WTC11 (cell line): ENCODE measurements at regions of chr15 and their contacts with region 1.

Region 1: DNA sequence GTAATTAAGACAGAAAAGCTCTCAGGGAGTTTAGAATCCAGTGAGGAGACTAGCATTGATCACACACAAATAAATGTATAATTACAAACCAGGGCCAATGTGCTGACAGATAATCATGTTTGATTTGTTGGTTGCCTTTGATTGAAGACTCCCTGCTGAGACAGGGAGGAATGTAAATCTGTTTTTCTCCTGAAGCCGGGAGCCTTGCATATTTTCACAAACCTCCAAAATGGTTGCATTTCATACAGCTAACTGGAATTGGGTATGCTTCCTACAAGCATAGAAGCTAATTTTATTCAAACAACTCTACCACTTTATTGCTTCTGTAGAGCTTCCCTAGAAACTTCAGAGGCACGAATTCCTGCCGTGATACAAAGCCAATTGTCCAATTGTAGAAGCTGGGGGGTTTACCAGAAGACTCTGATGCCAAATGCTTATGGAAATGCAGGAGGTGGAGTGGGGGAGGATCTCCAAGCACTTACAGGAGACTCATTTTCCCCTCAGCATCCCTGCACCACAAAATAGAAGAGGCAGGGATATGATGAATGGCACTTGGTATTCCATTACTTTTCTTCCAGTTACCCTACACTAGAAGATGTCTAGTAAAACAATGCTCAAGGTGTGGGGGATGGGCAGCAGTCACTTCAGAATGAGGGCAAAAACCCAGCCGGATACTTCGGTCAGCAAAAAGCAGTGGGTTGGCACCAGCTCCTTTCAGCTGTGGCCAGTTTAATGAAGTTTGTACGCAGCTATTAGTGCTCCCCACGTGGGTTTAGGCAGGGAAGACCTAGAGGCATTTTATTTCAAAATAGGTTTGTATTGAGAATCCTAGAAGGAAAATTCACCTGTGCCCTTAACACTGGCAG is 11.4 kb upstream of the MEX3B start:
- DNase-seq: no peak
- ATAC-seq: no peak
- H3K4me3 Mint-ChIP-seq: peak overlapping the region; percentile 81
- H3K27ac Mint-ChIP-seq: no peak overlapping the region
- H3K4me1 Mint-ChIP-seq: peaks cover 33% of the 10 kb centered on the region
- H3K27me3 Mint-ChIP-seq: peaks cover 69% of the 10 kb centered on the region
- CTCF ChIP-seq: no peak

Region 2: DNA sequence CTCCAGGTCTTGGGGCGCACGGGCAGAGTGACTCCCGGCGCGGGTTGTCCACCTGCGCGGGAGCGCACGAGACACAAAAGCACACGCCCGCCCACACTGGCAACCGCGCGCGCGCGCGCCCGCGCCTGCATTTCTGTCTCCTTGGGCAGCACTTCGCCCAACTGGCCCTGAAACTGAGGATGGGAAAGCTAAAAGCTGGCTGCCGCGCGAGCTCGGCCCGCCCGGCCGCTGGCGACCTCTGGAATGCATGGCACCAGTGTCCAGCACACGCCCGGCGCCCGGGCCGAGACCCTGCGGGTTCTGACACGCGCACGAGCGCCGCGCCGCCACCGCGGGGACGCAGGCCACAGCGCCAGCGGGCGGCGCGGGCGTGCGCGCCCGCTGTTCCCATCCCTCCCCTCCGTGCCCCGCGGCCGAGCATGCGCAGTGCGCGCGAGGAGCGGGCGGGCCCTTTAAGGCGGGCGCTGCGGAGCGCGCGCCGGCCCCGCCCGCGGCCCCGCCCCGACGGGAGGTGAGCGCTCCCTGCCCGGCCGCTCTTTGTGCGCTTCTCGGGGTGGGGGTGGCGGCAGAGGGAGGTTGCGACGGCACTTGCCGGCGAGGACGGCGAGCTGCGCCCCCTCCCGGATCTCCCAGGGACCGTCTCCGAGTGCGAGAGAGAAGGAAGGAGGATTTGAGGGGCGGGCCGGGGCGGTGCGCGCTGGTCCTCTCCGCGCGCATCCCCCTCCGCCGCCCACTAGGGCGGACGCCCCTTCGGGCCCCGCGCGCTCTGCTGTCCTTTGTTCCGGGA is 10.3 kb before region 1 on chr15:
- CTCF ChIA-PET with region 1: interaction called, 22 read pairs
- POLR2A ChIA-PET with region 1: interaction called, 11 read pairs
- DNase-seq: peak; percentile 97
- ATAC-seq: peak; percentile 53
- H3K4me3 Mint-ChIP-seq: peak overlapping the region; percentile 89
- H3K27ac Mint-ChIP-seq: peak overlapping the region; percentile 85; the same call in 1 of the 2 replicates
- H3K4me1 Mint-ChIP-seq: peaks cover 32% of the 10 kb centered on the region
- H3K27me3 Mint-ChIP-seq: peaks cover 46% of the 10 kb centered on the region
- CTCF ChIP-seq: peak; percentile 57